Panc1 (cell line): ENCODE measurements at regions of chr3 and their contacts with region 1.

Region 1: GRCh38 chr3:107522510-107523288 is at the start of gene BBX:
- DNase-seq: peak; percentile 98
- ATAC-seq: peak; percentile 96
- H3K4me3 ChIP-seq: peak within 1 kb of the TSS; percentile 59 to 86
- H3K27ac ChIP-seq: peak within 1 kb of the TSS; percentile 67
- H3K4me1 ChIP-seq: peaks cover 4% of the 10 kb centered on the region
- H3K27me3 ChIP-seq: peaks cover 8% of the 10 kb centered on the region; the same call in 1 of the 2 replicates
- CTCF ChIP-seq: no peak
- total RNA-seq, gene BBX: 28.5 TPM

Region 2: GRCh38 chr3:107429320-107430181 is 93.1 kb before region 1 on chr3:
- CTCF ChIA-PET with region 1: no interaction called
- POLR2A ChIA-PET with region 1: no interaction called
- in situ Hi-C with region 1: no loop called
- intact Hi-C with region 1: loop called (anchors 2 kb)
- DNase-seq: peak; percentile 61
- ATAC-seq: peak; percentile 80
- H3K4me3 ChIP-seq: peak overlapping the region in 1 of 2 experiments; percentile 75; a peak in 1 of 4 replicates
- H3K27ac ChIP-seq: no peak overlapping the region
- H3K4me1 ChIP-seq: peaks cover 12% of the 10 kb centered on the region
- H3K27me3 ChIP-seq: no peaks in the 10 kb centered on the region; the same call in 1 of the 2 replicates
- CTCF ChIP-seq: peak; percentile 96